Pancreas (tissue), 10 donors: ENCODE measurements at regions of chr1 and their contacts with region 1.

Region 1: DNA sequence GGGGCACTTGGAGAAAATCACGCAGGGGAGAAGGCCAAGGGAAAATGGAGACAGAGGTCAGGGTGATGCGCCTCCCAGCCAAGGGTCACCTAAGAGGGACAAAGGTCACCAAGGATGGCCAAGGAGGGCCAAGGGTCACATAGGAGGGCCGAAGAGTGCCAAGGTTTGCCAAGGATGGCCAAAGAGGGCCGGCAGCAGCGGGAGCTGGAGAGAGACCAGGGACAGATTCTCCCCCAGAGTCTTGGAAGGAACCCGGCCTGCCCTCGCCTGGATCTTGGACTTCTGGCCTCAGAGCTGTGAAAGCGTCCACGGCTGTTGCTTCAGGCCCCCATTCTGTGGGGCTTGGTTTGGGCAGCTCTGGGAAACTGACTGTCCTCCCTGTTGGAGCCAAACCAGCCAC is 25.6 kb upstream of the ARHGEF16 start:
- DNase-seq: peak in 2 of 6 donors; percentile 5 to 46
- ATAC-seq: no peak
- H3K4me3 ChIP-seq: no peak overlapping the region
- H3K27ac ChIP-seq: no peak overlapping the region
- H3K4me1 ChIP-seq: peaks cover 0 to 3% (median 0%) of the 10 kb centered on the region in 3 donors
- H3K27me3 ChIP-seq: no peaks in the 10 kb centered on the region
- CTCF ChIP-seq: no peak

Region 2: GRCh38 chr1:2821966-2822620 is 606.8 kb before region 1 on chr1:
- intact Hi-C with region 1: loop called in 1 of 3 experiments (anchors 5 kb)
- DNase-seq: peak in 5 of 6 donors; percentile 15 to 86 (median 66)
- ATAC-seq: peak; percentile 78 to 95 (median 85)
- H3K4me3 ChIP-seq: no peak overlapping the region
- H3K27ac ChIP-seq: no peak overlapping the region
- H3K4me1 ChIP-seq: no peaks in the 10 kb centered on the region
- H3K27me3 ChIP-seq: no peaks in the 10 kb centered on the region
- CTCF ChIP-seq: peak in 3 of 4 donors; percentile 30 to 51 (median 38)

Region 3: DNA sequence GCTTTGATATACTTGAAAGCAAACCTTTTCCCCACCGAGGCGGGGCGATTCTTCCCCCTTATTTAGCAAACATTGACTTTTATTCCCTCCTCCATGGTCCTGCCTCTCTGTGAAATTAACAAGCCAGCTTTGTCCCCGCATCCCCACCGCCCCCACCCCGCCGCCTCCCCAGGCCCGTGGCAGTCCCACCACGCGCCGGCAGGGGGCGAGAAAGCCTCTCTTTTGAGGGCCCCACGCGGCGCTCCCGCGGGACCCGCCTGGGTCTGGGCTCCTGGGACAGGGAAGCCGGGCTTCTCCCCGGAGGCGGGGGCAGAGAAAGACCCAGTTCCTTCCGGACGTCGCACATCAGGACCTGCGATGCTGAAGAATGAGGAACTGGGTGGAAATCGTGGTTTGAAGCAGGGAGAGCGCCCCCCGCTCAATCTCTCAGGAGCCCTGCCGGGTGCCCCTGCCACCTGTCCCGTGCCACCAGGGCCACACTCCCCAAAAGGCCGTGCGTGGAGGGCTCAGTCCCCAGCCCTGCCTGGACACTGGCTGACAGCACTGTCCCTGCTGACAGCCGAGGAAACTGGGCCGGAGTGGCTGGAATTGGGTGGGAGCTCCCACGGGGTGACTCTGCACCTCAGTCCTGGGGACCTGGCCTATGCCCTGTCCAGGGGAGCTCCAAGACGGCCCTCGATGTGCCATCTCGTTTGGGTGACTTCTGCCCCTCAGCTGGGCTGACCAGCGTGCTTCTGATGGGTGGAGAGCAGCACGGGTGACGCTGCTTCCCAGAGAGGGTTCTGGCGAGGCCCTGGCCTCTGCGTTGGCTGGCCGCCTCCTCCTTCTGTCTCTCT is 416.2 kb before region 1 on chr1:
- intact Hi-C with region 1: loop called in 2 of 3 experiments (anchors 5 kb)
- DNase-seq: peak in 5 of 6 donors; percentile 36 to 94 (median 76)
- ATAC-seq: peak; percentile 82 to 96 (median 92)
- H3K4me3 ChIP-seq: no peak overlapping the region
- H3K27ac ChIP-seq: peak overlapping the region in 3 of 4 donors; percentile 24 to 46 (median 35)
- H3K4me1 ChIP-seq: peaks cover 0 to 5% (median 0%) of the 10 kb centered on the region in 3 donors
- H3K27me3 ChIP-seq: no peaks in the 10 kb centered on the region
- CTCF ChIP-seq: peak; percentile 82 to 90 (median 90)

Region 4: GRCh38 chr1:3219005-3219790 is 209.7 kb before region 1 on chr1:
- intact Hi-C with region 1: no loop called
- DNase-seq: peak; percentile 80 to 93 (median 88)
- ATAC-seq: peak; percentile 55 to 71 (median 63)
- H3K4me3 ChIP-seq: peak overlapping the region in 1 of 4 donors; percentile 23
- H3K27ac ChIP-seq: peak overlapping the region; percentile 89 to 96 (median 92)
- H3K4me1 ChIP-seq: peaks cover 50 to 60% (median 54%) of the 10 kb centered on the region in 3 donors
- H3K27me3 ChIP-seq: no peaks in the 10 kb centered on the region
- CTCF ChIP-seq: no peak